ENCODE measurements at regions of chr6 and their contacts with region 1.

Region 1: DNA sequence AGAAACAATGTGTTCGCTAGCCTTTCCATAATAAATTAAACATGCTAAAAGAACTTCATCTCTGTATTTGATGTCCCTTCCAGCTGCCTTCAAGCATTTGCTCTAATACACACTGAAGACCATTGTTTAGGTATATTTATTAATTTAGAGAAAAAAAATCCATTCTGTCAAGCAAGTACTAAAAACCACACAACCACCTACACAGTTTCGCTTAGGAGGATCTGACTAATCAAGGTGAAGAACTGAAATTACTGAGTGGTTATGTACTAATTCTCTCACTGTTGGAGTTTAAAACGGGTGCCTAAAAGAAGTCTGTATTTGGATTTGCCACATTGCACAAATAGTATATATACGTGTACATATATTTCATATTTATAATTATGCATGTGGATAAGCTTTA is 58.9 kb downstream of the GMDS start:
- DNase-seq: no peak
- H3K4me3 Mint-ChIP-seq: no peak overlapping the region
- H3K27ac Mint-ChIP-seq: no peak overlapping the region
- H3K4me1 Mint-ChIP-seq: peaks cover 14% of the 10 kb centered on the region
- H3K27me3 Mint-ChIP-seq: peaks cover 20% of the 10 kb centered on the region

Region 2: DNA sequence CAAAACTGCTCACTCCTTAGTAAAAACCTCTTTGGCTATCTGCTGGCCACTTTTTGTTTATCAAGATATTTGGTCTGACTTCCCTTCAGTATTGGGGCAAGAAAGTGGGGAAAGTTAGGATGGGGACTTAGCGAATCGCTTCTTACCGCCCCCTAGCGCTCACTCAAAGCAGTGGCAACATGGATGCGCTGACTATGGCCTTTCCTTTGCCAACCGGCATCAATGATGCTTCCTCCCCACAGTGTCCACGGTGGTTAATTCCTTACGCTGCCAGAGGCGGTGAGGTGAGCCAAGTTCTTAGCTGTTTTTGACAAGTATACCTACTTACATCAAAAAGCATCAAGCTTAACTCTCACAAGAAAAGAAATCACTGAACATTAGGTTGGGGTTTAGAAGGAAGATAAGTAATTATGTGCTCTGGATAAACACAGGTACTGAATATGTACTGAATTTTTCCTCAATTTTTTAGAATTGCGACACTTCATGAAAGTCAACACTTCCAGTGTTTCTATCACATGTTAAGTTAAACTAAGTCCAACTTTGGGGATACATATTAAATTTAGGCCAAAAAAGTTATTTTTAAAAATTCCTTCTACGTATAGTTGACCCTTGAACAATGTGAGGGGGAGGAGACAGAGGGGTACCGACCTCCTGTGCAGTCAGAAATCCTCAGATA is 27.8 kb before region 1 on chr6:
- intact Hi-C with region 1: loop called (anchors 1 kb)
- DNase-seq: no peak
- H3K4me3 Mint-ChIP-seq: no peak overlapping the region
- H3K27ac Mint-ChIP-seq: no peak overlapping the region
- H3K4me1 Mint-ChIP-seq: peaks cover 37% of the 10 kb centered on the region
- H3K27me3 Mint-ChIP-seq: peaks cover 17% of the 10 kb centered on the region

Measured in activated CD4-positive, alpha-beta T cell treated with anti-CD3 and anti-CD28 coated beads, Interleukin-2, amount 10 ng/mL, durations not matched to agents 24 days and 14 days (primary cell).